Esophagus squamous epithelium (tissue), 5 donors: ENCODE measurements at regions of chr11 and their contacts with region 1.

Region 1: GRCh38 chr11:124837491-124837856 is 27.8 kb upstream of the ROBO3 start:
- DNase-seq: no peak
- H3K4me3 ChIP-seq: no peak overlapping the region
- H3K27ac ChIP-seq: no peak overlapping the region
- H3K4me1 ChIP-seq: peaks cover 11 to 31% (median 15%) of the 10 kb centered on the region in 3 donors
- H3K27me3 ChIP-seq: peaks cover 20 to 62% (median 29%) of the 10 kb centered on the region in 4 donors
- CTCF ChIP-seq: peak in 2 of 6 experiments; percentile 16 to 53
- POLR2A ChIP-seq: no peak

Region 2: DNA sequence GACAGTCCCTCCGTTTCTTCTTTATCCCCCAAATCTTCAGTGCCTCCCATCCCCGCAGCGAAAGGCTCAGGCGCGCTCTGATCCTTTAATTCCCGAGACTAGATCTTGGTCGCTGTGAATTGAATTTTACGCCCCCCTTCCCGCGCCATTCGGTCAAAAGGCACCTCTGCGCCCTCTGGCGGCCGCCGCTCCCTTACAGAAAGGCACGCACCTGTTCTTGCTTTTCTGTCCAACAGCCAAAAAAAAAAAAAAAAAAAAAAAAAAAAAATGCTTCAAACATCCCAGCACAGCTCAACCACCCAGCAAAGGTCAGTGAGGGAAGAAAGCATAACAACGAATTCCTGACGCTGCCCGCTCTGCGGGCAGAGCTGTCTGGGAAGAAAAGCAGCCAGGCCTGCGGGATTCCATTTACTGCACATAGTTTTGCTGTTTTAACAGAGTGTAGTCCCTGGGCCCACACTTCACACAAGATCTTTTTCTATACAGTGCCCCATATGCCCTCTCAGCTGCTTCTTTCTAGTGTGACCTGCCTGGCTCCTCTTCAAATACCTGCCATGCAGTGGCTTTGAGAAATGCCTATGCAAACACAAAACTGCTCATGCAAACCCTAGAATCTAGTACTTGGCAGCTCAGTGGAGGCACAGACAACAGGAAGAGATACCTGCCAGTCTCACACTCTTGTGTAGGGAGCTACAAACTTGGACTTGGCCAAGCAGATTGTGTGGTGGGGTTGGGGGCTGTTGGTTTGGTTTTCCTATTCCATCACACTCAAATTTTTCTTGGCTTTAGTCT is 74.1 kb before region 1 on chr11:
- intact Hi-C with region 1: loop called (anchors 10 kb)
- DNase-seq: peak; percentile 20
- H3K4me3 ChIP-seq: peak overlapping the region; percentile 32 to 77 (median 55)
- H3K27ac ChIP-seq: peak overlapping the region; percentile 43 to 91 (median 80)
- H3K4me1 ChIP-seq: peaks cover 22 to 57% (median 27%) of the 10 kb centered on the region in 3 donors
- H3K27me3 ChIP-seq: peaks cover 6 to 50% (median 20%) of the 10 kb centered on the region in 4 donors
- CTCF ChIP-seq: peak; percentile 35 to 76 (median 71)
- POLR2A ChIP-seq: no peak